Activated CD8-positive, alpha-beta T cell treated with anti-CD3 and anti-CD28 coated beads, Interleukin-2, amount 10 ng/mL, durations not matched to agents 7 days and 5 days (primary cell): ENCODE measurements at regions of chr12 and their contacts with region 1.

Region 1: GRCh38 chr12:13211859-13212664 is 15.5 kb downstream of the EMP1 start:
- DNase-seq: peak; percentile 84
- ATAC-seq: peak; percentile 62
- H3K4me3 Mint-ChIP-seq: no peak overlapping the region
- H3K27ac Mint-ChIP-seq: peak overlapping the region; percentile 65
- H3K4me1 Mint-ChIP-seq: peaks cover 44% of the 10 kb centered on the region
- H3K27me3 Mint-ChIP-seq: no peaks in the 10 kb centered on the region

Region 2: GRCh38 chr12:12983420-12984035 is 228.5 kb before region 1 on chr12:
- CTCF ChIA-PET with region 1: interaction called, 19 read pairs
- POLR2A ChIA-PET with region 1: no interaction called
- DNase-seq: no peak
- ATAC-seq: no peak
- H3K4me3 Mint-ChIP-seq: no peak overlapping the region
- H3K27ac Mint-ChIP-seq: no peak overlapping the region
- H3K4me1 Mint-ChIP-seq: no peaks in the 10 kb centered on the region
- H3K27me3 Mint-ChIP-seq: no peaks in the 10 kb centered on the region

Region 3: DNA sequence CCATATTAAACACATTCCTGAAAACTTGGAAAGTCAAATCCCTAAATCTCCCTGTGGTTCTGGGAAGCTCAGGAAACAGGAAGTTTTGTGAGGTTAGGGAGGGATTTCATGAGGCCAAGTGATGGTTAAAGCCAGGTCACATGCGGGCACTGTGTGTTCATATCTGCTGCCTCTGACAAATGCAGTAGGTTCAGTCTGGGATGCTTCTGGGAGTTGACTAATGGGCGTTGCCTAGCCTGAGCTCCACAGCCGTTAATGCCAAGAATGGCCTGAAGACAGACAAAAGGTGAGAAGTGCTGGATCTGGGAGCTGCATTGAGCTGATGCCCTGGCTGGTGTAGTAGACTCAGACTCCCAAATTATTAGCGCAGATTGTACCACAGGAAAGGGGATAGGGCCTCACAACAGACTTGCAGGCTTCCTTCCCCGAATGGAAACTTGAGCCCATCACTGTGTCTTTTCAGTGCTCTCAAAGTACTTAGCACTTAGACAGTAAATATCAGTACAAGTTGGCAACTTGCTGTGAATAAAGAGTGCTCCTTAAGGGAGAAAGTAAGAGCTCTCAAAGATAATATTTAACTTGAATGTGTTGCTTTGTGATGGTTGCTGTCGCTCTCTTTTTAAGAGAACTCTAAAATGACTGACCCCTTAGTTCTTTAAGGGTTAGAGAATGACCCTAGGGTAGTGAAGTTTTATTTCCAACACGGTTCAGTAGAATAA is 125.9 kb before region 1 on chr12:
- CTCF ChIA-PET with region 1: interaction called, 17 read pairs
- POLR2A ChIA-PET with region 1: no interaction called
- DNase-seq: no peak
- ATAC-seq: no peak
- H3K4me3 Mint-ChIP-seq: no peak overlapping the region
- H3K27ac Mint-ChIP-seq: no peak overlapping the region
- H3K4me1 Mint-ChIP-seq: no peaks in the 10 kb centered on the region
- H3K27me3 Mint-ChIP-seq: no peaks in the 10 kb centered on the region

Region 4: DNA sequence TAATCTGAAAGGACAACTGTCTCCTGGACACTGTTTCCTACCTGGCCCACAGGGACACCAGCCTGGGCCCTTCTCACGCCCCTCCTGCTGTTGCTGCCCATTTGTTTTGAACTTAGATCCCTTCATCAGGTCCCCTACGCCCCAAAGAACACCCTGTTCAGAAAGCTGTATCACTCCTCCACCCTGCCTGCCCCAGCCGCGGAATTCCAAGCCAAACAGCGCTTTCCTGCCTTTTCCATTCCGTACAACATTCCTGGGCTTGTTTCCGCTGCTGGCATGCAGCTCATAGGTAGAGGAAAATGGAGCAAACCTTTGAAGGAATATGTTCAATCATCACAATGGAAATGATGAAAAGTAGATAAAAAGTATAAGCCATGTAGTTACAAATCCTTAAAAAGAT is 95.8 kb before region 1 on chr12:
- CTCF ChIA-PET with region 1: interaction called, 10 read pairs
- POLR2A ChIA-PET with region 1: no interaction called
- DNase-seq: no peak
- ATAC-seq: no peak
- H3K4me3 Mint-ChIP-seq: no peak overlapping the region
- H3K27ac Mint-ChIP-seq: no peak overlapping the region
- H3K4me1 Mint-ChIP-seq: no peaks in the 10 kb centered on the region
- H3K27me3 Mint-ChIP-seq: peaks cover 21% of the 10 kb centered on the region

Region 5: DNA sequence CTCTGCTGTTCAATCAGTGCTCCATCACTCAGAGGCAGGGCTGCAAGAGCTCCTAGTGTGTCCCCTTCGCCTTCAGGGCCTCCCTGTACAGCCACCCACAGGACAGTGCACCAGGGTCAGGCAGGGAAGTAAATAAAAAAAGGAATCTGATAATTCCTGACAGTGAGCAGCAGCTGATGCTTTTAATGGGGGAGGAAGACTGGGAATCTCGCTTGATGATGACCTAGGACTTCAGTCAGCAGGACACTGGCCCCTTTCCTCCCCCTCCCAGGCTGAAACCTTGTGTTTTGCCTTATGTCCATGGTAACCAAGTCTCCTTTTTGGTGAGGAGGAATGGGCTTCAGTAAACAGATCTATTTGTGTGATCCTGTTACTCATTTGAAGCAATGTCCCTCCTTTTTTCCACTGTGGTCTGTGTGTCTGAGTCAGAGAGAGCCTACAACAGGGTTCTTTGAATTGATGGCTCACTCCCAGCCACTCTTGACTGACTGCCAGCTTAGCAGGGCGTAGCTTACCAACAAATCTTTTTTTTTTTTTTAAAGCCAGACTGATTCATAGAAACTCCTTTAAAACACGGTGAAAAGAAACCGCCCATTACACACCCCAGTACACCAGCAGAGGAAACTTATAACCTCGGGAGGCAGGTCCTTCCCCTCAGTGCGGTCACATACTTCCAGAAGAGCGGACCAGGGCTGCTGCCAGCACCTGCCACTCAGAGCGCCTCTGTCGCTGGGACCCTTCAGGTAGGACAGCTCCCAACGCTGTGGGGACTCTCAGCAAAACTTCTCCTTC is 15.7 kb before region 1 on chr12 and contains the start of gene EMP1:
- CTCF ChIA-PET with region 1: interaction called, 33 read pairs
- POLR2A ChIA-PET with region 1: no interaction called
- DNase-seq: peak; percentile 84
- ATAC-seq: peak; percentile 95
- H3K4me3 Mint-ChIP-seq: peak within 1 kb of the TSS; percentile 60
- H3K27ac Mint-ChIP-seq: peak within 1 kb of the TSS; percentile 80
- H3K4me1 Mint-ChIP-seq: peaks cover 41% of the 10 kb centered on the region
- H3K27me3 Mint-ChIP-seq: peaks cover 37% of the 10 kb centered on the region
- total RNA-seq, gene EMP1: 4.4 to 7.6 TPM

Region 6: DNA sequence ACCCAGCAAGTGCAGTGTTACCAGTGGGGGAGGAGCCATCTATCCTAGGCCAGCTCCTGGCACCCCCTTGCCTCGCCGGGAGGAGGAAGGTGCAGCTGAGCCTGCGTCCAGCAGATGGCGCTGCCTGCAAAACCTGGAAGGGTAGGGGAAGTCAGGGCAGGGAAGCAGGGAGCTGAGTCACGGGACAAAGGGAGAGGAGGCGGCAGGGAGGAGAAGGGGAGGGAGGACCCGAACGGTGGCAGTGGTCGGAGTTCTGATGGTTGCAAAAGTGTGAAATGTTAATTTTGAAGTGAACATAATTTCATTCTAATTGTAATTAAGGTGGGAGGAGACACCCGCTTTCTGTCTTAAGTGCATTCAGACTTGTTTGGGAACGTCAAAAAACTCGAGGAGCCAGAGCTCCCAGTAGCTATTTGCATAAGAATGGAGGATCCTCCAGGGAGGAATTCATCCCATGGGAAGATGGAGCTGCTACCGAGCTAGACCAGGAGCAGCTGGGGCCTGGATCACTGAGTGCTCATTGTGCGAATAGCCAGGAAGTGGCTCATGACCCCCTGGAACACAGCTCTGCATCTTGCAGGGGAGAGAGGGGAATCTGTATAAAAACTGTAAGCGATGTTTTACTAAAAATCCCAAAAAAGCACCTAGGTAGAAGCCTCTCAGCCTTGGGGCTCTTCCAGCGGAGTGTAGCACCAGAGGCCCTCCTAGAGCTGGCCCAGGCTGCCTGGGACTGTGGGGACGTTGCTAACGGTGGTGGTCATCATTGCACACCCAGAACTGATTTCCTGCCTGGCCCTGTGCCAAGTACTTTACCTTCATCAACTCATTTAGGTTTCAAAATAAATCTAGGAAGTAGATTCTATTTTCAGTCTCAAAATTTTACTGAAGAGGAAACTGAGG is 44.0 kb after region 1 on chr12:
- CTCF ChIA-PET with region 1: interaction called, 11 read pairs
- POLR2A ChIA-PET with region 1: no interaction called
- DNase-seq: peak; percentile 84
- ATAC-seq: peak; percentile 100
- H3K4me3 Mint-ChIP-seq: no peak overlapping the region
- H3K27ac Mint-ChIP-seq: no peak overlapping the region
- H3K4me1 Mint-ChIP-seq: peaks cover 3% of the 10 kb centered on the region
- H3K27me3 Mint-ChIP-seq: peaks cover 9% of the 10 kb centered on the region